ENCODE measurements at regions of chr5 and their contacts with region 1.

Region 1: GRCh38 chr5:81506900-81507588 is 113.1 kb upstream of the ACOT12 start:
- DNase-seq: peak; percentile 12 to 83
- H3K4me3 ChIP-seq: no peak overlapping the region
- H3K27ac ChIP-seq: peak overlapping the region; percentile 45 to 67
- H3K4me1 ChIP-seq: peaks cover 0 to 11% of the 10 kb centered on the region in 2 donors
- H3K27me3 ChIP-seq: no peaks in the 10 kb centered on the region
- CTCF ChIP-seq: peak; percentile 78 to 85 (median 82)

Region 2: DNA sequence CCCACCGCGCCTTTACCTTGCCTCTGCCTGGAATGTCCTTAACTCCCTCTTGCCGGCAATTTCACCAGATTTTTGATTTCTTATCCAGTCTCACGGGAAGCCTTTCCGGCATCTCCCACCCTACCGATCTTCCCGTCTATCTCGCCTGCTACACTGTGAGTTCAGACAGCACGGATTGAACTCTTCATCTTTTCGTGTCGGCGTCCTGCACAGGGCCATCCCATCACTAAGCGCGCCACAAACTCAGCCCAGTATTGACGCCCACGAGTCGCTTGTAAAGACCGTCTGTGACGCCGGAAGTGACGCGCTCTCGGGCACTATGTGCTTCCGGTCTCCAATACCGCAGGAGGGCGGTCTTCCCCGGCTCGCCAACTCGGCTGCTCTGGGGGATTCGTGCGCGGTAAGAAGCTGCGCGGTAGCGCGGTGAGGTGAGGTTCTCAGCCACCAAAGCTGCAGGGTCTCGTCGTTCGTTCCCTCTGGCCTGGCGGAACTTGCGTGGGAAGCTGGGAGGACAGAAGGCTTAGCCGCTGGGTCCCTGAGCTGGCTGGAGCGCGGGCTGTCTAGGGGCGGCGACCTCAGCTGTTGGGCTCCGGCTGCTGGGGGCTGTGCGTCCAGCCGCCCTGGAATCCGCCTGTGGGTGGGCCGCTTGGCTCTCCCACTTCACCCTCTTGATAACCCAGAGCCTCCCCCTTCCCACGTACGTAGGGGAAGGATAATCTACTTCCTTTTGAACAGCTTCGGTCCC is 205.6 kb before region 1 on chr5 and contains the start of gene ZCCHC9:
- intact Hi-C with region 1: loop called (anchors 5 kb)
- DNase-seq: peak; percentile 74 to 96
- H3K4me3 ChIP-seq: peak within 1 kb of the TSS; percentile 77 to 96
- H3K27ac ChIP-seq: peak within 1 kb of the TSS; percentile 88 to 93
- H3K4me1 ChIP-seq: peaks cover 5 to 16% of the 10 kb centered on the region in 2 donors
- H3K27me3 ChIP-seq: no peaks in the 10 kb centered on the region
- CTCF ChIP-seq: peak in 2 of 3 experiments; percentile 17 to 19
- total RNA-seq, gene ZCCHC9: 10.5 TPM

Region 3: DNA sequence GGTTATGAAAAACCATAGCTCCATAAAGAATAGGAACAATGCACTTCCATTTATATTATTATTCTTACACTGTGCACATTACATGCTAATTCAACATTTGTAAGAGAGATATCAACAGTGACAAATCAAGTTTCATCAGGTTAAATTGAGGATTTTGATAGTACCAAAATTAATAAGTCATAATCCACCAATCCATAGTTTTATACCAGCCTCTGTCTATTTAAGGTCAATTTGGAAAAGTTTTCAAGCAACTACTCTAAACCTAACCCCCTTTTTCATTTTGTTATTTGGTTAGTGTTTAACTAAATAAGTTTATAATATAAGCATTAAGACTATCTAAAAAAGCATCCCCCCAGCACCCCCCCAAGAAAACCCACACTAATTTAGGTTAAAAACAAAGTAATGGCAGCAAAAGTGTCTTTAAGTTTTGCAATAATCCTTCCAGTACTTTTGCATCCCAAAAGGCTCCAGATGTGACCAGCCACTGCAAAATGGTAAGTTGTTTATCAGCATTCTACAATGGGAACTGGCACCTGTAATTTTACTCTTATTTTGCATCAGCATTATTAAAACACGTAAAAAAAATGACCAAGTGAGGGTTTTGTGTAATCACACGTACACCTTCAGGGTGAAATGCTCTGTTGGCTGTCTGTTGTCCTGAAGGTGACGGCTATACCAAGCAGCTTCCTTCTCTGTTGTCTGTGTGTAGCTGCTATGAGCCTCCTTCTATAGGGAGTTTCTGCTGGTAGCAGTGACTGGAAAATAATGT is 280.6 kb after region 1 on chr5:
- intact Hi-C with region 1: loop called (anchors 2 kb)
- DNase-seq: peak in 1 of 2 donors; percentile 83
- H3K4me3 ChIP-seq: peak overlapping the region in 1 of 2 donors; percentile 33
- H3K27ac ChIP-seq: peak overlapping the region in 1 of 2 donors; percentile 12
- H3K4me1 ChIP-seq: peaks cover 0 to 13% of the 10 kb centered on the region in 2 donors
- H3K27me3 ChIP-seq: no peaks in the 10 kb centered on the region
- CTCF ChIP-seq: no peak

Region 4: DNA sequence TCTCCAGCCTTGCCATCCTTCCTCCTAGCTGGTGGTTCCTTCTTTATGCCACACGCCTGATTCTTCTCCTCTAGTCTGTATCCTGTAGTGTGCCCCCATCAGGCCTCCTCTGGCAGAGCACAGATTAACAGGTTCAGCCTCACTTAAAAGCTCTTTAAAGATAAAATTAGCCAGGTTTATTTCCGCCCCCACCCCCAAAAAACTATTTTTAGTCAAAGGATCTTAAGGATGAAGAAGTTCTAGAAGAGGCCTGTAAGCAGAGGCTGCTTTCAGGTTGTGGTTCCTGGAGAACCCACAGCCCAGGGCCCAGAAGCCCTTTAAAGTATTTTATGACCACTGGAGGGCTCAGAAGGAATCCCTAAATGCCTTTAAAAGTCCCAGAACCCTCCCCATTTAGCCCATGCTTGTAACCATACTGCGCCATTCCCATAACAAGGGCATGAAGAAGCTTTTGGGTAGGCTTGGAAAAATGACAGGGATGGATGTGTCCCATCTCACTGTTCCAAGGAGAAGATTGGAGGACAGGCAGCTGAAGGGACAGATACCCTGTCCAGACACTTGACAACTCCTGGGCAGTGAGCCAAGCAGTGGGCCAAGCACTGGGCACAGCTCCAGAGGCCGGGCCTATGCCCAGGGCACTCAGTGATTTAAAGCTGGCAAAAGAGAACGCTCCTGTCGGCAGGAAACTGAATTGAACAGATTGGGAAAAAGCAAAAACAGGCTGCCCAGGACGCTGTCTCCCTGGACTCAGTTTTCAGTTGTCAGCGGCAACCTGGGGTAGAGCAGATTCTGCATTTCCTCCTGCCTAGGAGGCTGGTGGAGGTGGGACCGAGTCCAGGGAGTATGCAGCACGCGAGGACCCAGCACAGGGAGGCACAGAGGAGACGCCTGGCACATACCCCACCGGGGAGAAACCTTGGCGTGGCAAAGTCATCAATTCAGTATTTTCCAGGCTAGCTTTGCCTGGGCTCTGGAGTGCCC is 350.2 kb after region 1 on chr5:
- intact Hi-C with region 1: loop called (anchors 2 kb)
- DNase-seq: peak in 1 of 2 donors; percentile 85
- H3K4me3 ChIP-seq: peak overlapping the region in 1 of 2 donors; percentile 38
- H3K27ac ChIP-seq: peak overlapping the region; percentile 71 to 90
- H3K4me1 ChIP-seq: peaks cover 5 to 17% of the 10 kb centered on the region in 2 donors
- H3K27me3 ChIP-seq: no peaks in the 10 kb centered on the region
- CTCF ChIP-seq: peak in 2 of 3 experiments; percentile 20 to 30

Region 5: GRCh38 chr5:82165740-82166530 is 658.9 kb after region 1 on chr5:
- intact Hi-C with region 1: loop called (anchors 2 kb)
- DNase-seq: peak in 1 of 2 donors; percentile 83
- H3K4me3 ChIP-seq: no peak overlapping the region
- H3K27ac ChIP-seq: peak overlapping the region; percentile 0 to 36
- H3K4me1 ChIP-seq: peaks cover 2 to 9% of the 10 kb centered on the region in 2 donors
- H3K27me3 ChIP-seq: no peaks in the 10 kb centered on the region
- CTCF ChIP-seq: peak; percentile 65 to 75 (median 73)